ENCODE measurements at regions of chr15 and their contacts with region 1.

Region 1: GRCh38 chr15:85689729-85690128 is 105.0 kb downstream of the KLHL25 start:
- DNase-seq: peak; percentile 76
- H3K4me3 Mint-ChIP-seq: peak overlapping the region; percentile 84
- H3K27ac Mint-ChIP-seq: peak overlapping the region; percentile 99
- H3K4me1 Mint-ChIP-seq: peaks cover 78% of the 10 kb centered on the region
- H3K27me3 Mint-ChIP-seq: no peaks in the 10 kb centered on the region

Region 2: GRCh38 chr15:85306946-85307708 is 382.6 kb before region 1 on chr15:
- CTCF ChIA-PET with region 1: no interaction called
- intact Hi-C with region 1: no loop called
- DNase-seq: no peak
- H3K4me3 Mint-ChIP-seq: no peak overlapping the region
- H3K27ac Mint-ChIP-seq: no peak overlapping the region
- H3K4me1 Mint-ChIP-seq: peaks cover 13% of the 10 kb centered on the region
- H3K27me3 Mint-ChIP-seq: no peaks in the 10 kb centered on the region

Region 3: GRCh38 chr15:85646538-85647091 is 43.1 kb before region 1 on chr15:
- CTCF ChIA-PET with region 1: no interaction called
- intact Hi-C with region 1: loop called (anchors 2 kb)
- DNase-seq: peak; percentile 21
- H3K4me3 Mint-ChIP-seq: no peak overlapping the region
- H3K27ac Mint-ChIP-seq: peak overlapping the region; percentile 52
- H3K4me1 Mint-ChIP-seq: peaks cover 46% of the 10 kb centered on the region
- H3K27me3 Mint-ChIP-seq: no peaks in the 10 kb centered on the region

Region 4: GRCh38 chr15:85667491-85668424 is 22.0 kb before region 1 on chr15:
- CTCF ChIA-PET with region 1: no interaction called
- intact Hi-C with region 1: loop called (anchors 1 kb)
- DNase-seq: peak; percentile 78
- H3K4me3 Mint-ChIP-seq: no peak overlapping the region
- H3K27ac Mint-ChIP-seq: peak overlapping the region; percentile 93
- H3K4me1 Mint-ChIP-seq: peaks cover 26% of the 10 kb centered on the region
- H3K27me3 Mint-ChIP-seq: no peaks in the 10 kb centered on the region

Region 5: DNA sequence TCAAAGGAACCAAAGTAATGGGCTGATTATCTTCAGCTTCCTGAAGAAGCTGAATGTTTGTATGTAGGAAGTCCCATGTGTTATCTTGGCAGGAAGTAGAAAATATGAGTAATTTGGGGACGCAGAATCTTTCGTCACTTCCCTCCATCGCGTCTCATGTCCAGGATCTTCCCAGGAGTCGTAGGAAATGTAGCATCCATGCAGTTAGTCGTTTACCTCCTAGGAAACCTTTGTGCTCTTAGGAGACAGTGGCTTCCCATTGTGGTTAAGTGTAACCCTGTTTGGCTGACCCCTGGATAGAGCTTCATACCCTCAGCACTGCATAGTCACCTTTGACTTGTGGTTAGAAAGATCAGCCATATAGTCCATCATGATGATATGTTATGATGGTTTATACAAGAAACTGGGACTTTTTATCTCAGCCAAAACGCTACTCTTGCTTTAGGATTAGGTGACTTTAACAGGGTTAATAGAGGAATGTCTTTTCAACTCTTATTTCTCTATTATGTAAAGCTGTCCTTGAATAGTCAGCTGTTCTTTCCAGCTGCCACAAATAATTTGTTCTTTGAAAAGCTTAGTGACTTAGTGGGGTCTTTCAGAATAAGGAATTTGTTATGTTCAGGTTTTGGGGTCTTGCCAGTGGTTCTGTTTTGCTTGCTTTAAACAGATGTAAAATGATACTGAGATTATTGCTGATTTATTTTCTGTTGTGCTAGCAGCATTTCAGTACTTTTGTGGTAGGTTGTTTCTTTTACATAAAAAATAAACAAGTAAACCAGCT is 12.8 kb after region 1 on chr15:
- CTCF ChIA-PET with region 1: interaction called, 31 read pairs
- intact Hi-C with region 1: loop called (anchors 1 kb)
- DNase-seq: peak; percentile 56
- H3K4me3 Mint-ChIP-seq: peak overlapping the region; percentile 58
- H3K27ac Mint-ChIP-seq: peak overlapping the region; percentile 98
- H3K4me1 Mint-ChIP-seq: peaks cover 71% of the 10 kb centered on the region
- H3K27me3 Mint-ChIP-seq: no peaks in the 10 kb centered on the region

Region 6: GRCh38 chr15:85707519-85708338 is 18.0 kb after region 1 on chr15:
- CTCF ChIA-PET with region 1: interaction called, 31 read pairs
- intact Hi-C with region 1: loop called (anchors 1 kb)
- DNase-seq: peak; percentile 51
- H3K4me3 Mint-ChIP-seq: peak overlapping the region; percentile 79
- H3K27ac Mint-ChIP-seq: peak overlapping the region; percentile 99
- H3K4me1 Mint-ChIP-seq: peaks cover 87% of the 10 kb centered on the region
- H3K27me3 Mint-ChIP-seq: no peaks in the 10 kb centered on the region

Region 7: DNA sequence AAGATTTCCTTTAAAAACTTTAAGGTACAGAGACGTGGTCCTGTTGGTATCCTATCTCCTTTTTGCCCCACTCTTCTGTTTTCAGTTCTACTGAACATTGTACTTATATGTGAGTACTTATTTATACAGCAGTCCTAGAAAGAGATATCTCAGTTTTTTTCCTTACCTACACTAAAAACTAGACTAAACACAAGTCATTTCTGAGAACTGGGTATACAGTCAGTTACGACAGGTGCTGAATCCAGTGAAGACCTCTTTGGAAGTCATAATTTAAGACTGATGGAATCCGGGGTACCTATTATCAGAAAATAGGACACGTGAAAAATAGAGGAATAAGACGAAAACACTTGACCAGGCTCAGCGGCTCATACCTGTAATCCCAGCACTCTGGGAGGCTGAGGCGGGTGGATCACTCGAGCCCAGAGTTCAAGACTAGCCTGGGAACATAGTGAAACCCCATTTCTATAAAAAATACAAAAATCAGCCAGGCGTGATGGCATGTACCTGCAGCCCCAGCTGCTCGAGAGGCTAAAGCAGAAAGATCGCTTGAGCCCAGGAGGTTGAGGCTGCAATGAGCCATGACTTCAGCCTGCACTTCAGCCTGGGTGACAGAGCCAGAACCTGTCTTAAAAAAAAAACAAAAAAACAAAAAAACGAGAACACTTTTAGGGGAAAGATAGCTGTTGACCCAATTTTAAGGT is 28.7 kb after region 1 on chr15:
- CTCF ChIA-PET with region 1: interaction called, 4 read pairs
- intact Hi-C with region 1: loop called (anchors 2 kb)
- DNase-seq: no peak
- H3K4me3 Mint-ChIP-seq: no peak overlapping the region
- H3K27ac Mint-ChIP-seq: peak overlapping the region; percentile 79
- H3K4me1 Mint-ChIP-seq: peaks cover 69% of the 10 kb centered on the region
- H3K27me3 Mint-ChIP-seq: no peaks in the 10 kb centered on the region

Region 8: GRCh38 chr15:85723960-85724945 is 34.5 kb after region 1 on chr15:
- CTCF ChIA-PET with region 1: interaction called, 4 read pairs
- intact Hi-C with region 1: loop called (anchors 1 kb)
- DNase-seq: peak; percentile 41
- H3K4me3 Mint-ChIP-seq: peak overlapping the region; percentile 43
- H3K27ac Mint-ChIP-seq: peak overlapping the region; percentile 97
- H3K4me1 Mint-ChIP-seq: peaks cover 67% of the 10 kb centered on the region
- H3K27me3 Mint-ChIP-seq: no peaks in the 10 kb centered on the region

Measured in activated naive CD4-positive, alpha-beta T cell treated with anti-CD3 and anti-CD28 coated beads for 36 hours (primary cell).